Caco-2 (cell line): ENCODE measurements at regions of chr11 and their contacts with region 1.

Region 1: GRCh38 chr11:3021125-3021524 is 29.0 kb upstream of the NAP1L4 start:
- DNase-seq: peak in 1 of 2 experiments; percentile 59
- H3K4me3 ChIP-seq: no peak overlapping the region
- H3K4me3 Mint-ChIP-seq: no peak overlapping the region
- H3K27ac Mint-ChIP-seq: no peak overlapping the region
- H3K4me1 ChIP-seq: peaks cover 9% of the 10 kb centered on the region; the same call in 1 of the 2 replicates
- H3K4me1 Mint-ChIP-seq: peaks cover 24% of the 10 kb centered on the region
- H3K27me3 ChIP-seq: no peaks in the 10 kb centered on the region
- H3K27me3 Mint-ChIP-seq: no peaks in the 10 kb centered on the region
- CTCF ChIP-seq: peak; percentile 53 to 86

Region 2: GRCh38 chr11:2924381-2924780 is 96.7 kb before region 1 on chr11:
- CTCF ChIA-PET with region 1: no interaction called
- POLR2A ChIA-PET with region 1: no interaction called
- intact Hi-C with region 1: no loop called
- DNase-seq: no peak
- H3K4me3 ChIP-seq: no peak overlapping the region
- H3K4me3 Mint-ChIP-seq: no peak overlapping the region
- H3K27ac Mint-ChIP-seq: no peak overlapping the region
- H3K4me1 ChIP-seq: peaks cover 7% of the 10 kb centered on the region; the same call in 1 of the 2 replicates
- H3K4me1 Mint-ChIP-seq: no peaks in the 10 kb centered on the region
- H3K27me3 ChIP-seq: 0 out of 2 replicates have a peak, but pooled peaks cover 2% of the 10 kb centered on the region
- H3K27me3 Mint-ChIP-seq: no peaks in the 10 kb centered on the region
- CTCF ChIP-seq: no peak

Region 3: DNA sequence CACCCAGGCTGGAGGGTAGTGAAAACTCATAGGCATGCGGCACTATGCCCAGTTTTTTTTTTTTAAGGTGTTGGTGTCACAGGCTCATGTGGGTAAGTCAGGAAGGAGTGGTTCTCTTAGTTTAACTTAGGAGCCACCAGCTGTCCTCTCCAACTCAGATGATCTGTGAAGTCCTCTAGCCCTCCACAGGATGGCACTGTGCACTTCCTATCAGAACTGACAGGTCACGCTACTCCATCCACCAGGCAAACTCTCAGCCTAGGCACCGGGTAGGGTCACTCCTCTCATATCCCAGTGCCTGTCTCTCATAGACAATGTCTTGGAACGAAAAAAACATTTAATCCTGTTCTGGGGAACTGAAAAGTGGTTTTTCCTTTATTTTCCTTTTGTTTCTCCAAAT is 45.5 kb before region 1 on chr11:
- CTCF ChIA-PET with region 1: no interaction called
- POLR2A ChIA-PET with region 1: no interaction called
- intact Hi-C with region 1: loop called (anchors 5 kb)
- DNase-seq: peak in 1 of 2 experiments; percentile 43
- H3K4me3 ChIP-seq: no peak overlapping the region
- H3K4me3 Mint-ChIP-seq: no peak overlapping the region
- H3K27ac Mint-ChIP-seq: no peak overlapping the region
- H3K4me1 ChIP-seq: no peaks in the 10 kb centered on the region
- H3K4me1 Mint-ChIP-seq: no peaks in the 10 kb centered on the region
- H3K27me3 ChIP-seq: no peaks in the 10 kb centered on the region
- H3K27me3 Mint-ChIP-seq: no peaks in the 10 kb centered on the region
- CTCF ChIP-seq: peak; percentile 54 to 67